ENCODE measurements at regions of chr4 and their contacts with region 1.

Region 1: GRCh38 chr4:82515705-82516104 is 46.1 kb downstream of the TMEM150C start:
- DNase-seq: peak in 8 of 10 donors; percentile 44 to 77 (median 54)
- H3K4me3 ChIP-seq: peak overlapping the region in 27 of 59 donors; percentile 1 to 41 (median 19)
- H3K27ac ChIP-seq: peak overlapping the region; percentile 79 to 99 (median 94)
- H3K27me3 ChIP-seq: no peaks in the 10 kb centered on the region
- CTCF ChIP-seq: peak in 6 of 56 donors; percentile 7 to 30 (median 11)

Region 2: GRCh38 chr4:82430193-82430963 is 85.3 kb before region 1 on chr4 and contains the starts of genes ENOPH1 and HNRNPDL:
- intact Hi-C with region 1: no loop called
- DNase-seq: peak; percentile 96 to 99 (median 98)
- H3K4me3 ChIP-seq: peak within 1 kb of the TSS; percentile 62 to 98 (median 92)
- H3K27ac ChIP-seq: peak within 1 kb of the TSS; percentile 90 to 100 (median 98)
- H3K27me3 ChIP-seq: no peaks in the 10 kb centered on the region
- CTCF ChIP-seq: peak in 36 of 56 donors; percentile 4 to 58 (median 24)
- total RNA-seq, gene ENOPH1: 35.3 to 86.8 (median 62.2) TPM
- total RNA-seq, gene HNRNPDL: 161 to 456 (median 285) TPM

Region 3: GRCh38 chr4:82469791-82470345 is 45.8 kb before region 1 on chr4:
- intact Hi-C with region 1: loop called in 1 of 2 experiments (anchors 5 kb)
- DNase-seq: peak in 2 of 10 donors; percentile 29 to 39
- H3K4me3 ChIP-seq: peak overlapping the region in 1 of 59 donors; percentile 19
- H3K27ac ChIP-seq: peak overlapping the region in 24 of 59 donors; percentile 3 to 67 (median 46)
- H3K27me3 ChIP-seq: no peaks in the 10 kb centered on the region
- CTCF ChIP-seq: peak in 42 of 56 donors; percentile 12 to 62 (median 38)

Region 4: GRCh38 chr4:82774711-82775171 is 259.0 kb after region 1 on chr4:
- intact Hi-C with region 1: no loop called
- DNase-seq: peak in 8 of 10 donors; percentile 47 to 70 (median 58)
- H3K4me3 ChIP-seq: no peak overlapping the region
- H3K27ac ChIP-seq: peak overlapping the region in 58 of 59 donors; percentile 34 to 98 (median 93)
- H3K27me3 ChIP-seq: no peaks in the 10 kb centered on the region
- CTCF ChIP-seq: no peak

Measured in dorsolateral prefrontal cortex (tissue), 120 donors.